ENCODE measurements at regions of chr4 and their contacts with region 1.

Region 1: GRCh38 chr4:39638354-39639240 is at the start of gene SMIM14:
- DNase-seq: peak; percentile 98
- H3K4me3 ChIP-seq: peak within 1 kb of the TSS; percentile 98
- H3K27ac ChIP-seq: peak within 1 kb of the TSS; percentile 99
- H3K4me1 ChIP-seq: peaks cover 52% of the 10 kb centered on the region
- H3K27me3 ChIP-seq: no peaks in the 10 kb centered on the region
- CTCF ChIP-seq: peak; percentile 45
- total RNA-seq, gene SMIM14: 11.4 TPM

Region 2: DNA sequence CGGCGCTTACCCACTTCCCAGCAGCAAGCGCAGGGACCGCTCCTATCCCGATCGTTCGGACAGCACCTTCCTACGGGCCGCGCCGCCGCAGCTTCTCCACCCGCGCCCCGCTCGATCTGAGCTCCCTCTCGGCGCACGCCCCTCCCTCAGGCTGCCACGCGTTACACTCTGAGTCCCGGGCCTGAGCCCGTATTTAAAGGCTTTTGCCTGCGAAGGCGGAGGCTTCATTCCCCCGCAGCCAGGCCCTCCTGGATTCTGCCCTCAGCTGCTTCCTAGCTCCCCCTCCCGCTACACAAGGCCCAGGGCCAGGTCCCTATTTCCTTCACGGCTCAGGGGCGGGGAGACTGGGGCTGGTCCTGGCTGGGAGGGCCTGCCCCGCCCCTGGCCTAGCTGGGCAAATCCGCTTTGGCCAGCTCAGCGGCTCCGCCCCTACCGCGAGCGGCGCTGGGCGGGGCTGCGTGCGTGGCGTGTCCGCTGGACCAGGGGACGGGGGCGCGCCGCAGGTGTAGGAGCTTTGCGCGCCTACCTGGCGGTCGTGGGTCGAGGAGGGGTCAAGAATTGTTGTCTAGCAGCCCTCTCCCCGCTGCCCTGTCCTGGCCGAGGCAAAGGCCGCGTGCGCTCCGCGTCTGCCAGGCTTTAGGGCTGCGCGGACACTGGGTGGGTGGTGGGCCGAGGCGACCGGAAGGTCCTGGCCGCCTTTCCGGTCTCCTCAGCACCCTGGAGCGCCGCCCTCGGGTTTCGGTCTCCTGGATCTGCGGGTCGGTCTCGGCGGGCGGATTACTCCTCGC is 111.1 kb before region 1 on chr4 and contains the start of gene UGDH:
- intact Hi-C with region 1: loop called (anchors 5 kb)
- DNase-seq: peak; percentile 97
- H3K4me3 ChIP-seq: peak within 1 kb of the TSS; percentile 92
- H3K27ac ChIP-seq: peak within 1 kb of the TSS; percentile 99
- H3K4me1 ChIP-seq: peaks cover 38% of the 10 kb centered on the region
- H3K27me3 ChIP-seq: no peaks in the 10 kb centered on the region
- CTCF ChIP-seq: no peak
- total RNA-seq, gene UGDH: 11.5 TPM